Mammary epithelial cell (primary cell): ENCODE measurements at regions of chr2 and their contacts with region 1.

Region 1: GRCh38 chr2:220198920-220199319 is 571.5 kb downstream of the SLC4A3 start:
- DNase-seq: peak; percentile 96
- H3K4me3 ChIP-seq: no peak overlapping the region
- H3K27ac ChIP-seq: peak overlapping the region; percentile 26
- H3K4me1 ChIP-seq: peaks cover 26% of the 10 kb centered on the region
- H3K27me3 ChIP-seq: no peaks in the 10 kb centered on the region
- CTCF ChIP-seq: no peak

Region 2: GRCh38 chr2:220219371-220219770 is 20.5 kb after region 1 on chr2:
- CTCF ChIA-PET with region 1: no interaction called
- dilution Hi-C with region 1: no loop called
- in situ Hi-C with region 1: no loop called
- intact Hi-C with region 1: loop called (anchors 2 kb)
- DNase-seq: peak; percentile 96
- H3K4me3 ChIP-seq: no peak overlapping the region
- H3K27ac ChIP-seq: peak overlapping the region; percentile 63
- H3K4me1 ChIP-seq: peaks cover 33% of the 10 kb centered on the region
- H3K27me3 ChIP-seq: no peaks in the 10 kb centered on the region
- CTCF ChIP-seq: no peak

Region 3: DNA sequence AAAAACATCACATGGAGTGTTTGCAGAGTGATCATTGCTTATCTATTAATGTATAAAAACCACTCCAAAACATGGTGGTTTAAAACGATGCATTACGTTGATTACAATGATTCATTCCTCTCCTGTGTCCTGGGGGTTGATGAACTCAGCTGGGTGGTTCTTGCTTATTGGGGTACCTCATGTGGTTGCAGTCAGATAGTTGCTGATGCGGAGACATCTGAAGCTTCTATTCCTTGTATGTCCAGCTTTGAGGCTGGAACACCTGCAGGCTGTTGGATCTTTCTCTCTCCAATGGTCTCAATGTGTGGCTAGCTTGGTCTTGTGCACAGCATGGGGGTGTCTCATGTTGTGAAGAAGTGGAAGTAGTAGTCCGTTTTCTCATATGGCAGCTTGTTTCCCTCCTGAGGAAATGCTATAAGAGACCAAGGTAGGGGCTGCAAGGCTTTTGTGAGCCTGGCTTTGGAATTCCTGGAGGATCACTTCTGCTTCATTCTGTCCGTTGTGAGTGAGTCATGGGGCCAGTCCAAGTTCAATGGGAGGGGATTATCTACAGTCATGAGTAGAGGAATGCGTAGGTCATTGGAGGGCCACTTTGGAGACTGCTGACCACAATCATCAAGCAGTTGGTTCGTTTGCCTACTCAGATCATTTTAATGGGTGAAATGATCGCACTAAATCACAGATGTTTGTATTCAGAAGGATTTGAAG is 29.5 kb after region 1 on chr2:
- CTCF ChIA-PET with region 1: no interaction called
- dilution Hi-C with region 1: no loop called
- in situ Hi-C with region 1: no loop called
- intact Hi-C with region 1: loop called (anchors 1 kb)
- DNase-seq: peak; percentile 91
- H3K4me3 ChIP-seq: no peak overlapping the region
- H3K27ac ChIP-seq: peak overlapping the region; percentile 37
- H3K4me1 ChIP-seq: peaks cover 52% of the 10 kb centered on the region
- H3K27me3 ChIP-seq: no peaks in the 10 kb centered on the region
- CTCF ChIP-seq: no peak